Gastrocnemius medialis (tissue), 4 donors: ENCODE measurements at regions of chr18 and their contacts with region 1.

Region 1: DNA sequence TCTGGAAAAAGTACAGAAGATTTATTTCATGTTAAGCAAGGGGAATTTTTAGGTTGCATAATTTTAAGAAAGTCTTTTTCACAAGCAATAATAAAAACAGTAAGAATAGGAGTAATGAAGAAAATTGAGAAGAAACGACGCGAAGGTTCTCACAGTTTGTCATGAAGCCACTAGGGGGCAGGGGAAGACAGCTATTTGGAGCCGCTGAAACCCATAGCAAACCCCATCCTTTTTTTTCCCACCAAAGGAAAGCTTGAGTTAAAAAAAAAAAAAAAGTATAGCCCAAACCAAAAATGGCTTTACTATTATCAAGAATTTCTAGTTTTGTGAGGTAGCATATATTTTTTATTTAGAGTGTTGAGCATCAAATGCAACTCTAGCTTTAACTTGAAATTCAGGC is 300.9 kb downstream of the PHLPP1 start:
- DNase-seq: peak in 1 of 2 donors; percentile 12
- ATAC-seq: peak; percentile 66 to 69
- H3K4me3 ChIP-seq: no peak overlapping the region
- H3K27ac ChIP-seq: no peak overlapping the region
- H3K4me1 ChIP-seq: no peaks in the 10 kb centered on the region
- H3K27me3 ChIP-seq: no peaks in the 10 kb centered on the region
- CTCF ChIP-seq: peak; percentile 43 to 78 (median 70)
- POLR2A ChIP-seq: no peak

Region 2: GRCh38 chr18:63119647-63120046 is 103.4 kb after region 1 on chr18:
- in situ Hi-C with region 1: loop called in 1 of 4 experiments (anchors 10 kb)
- intact Hi-C with region 1: loop called (anchors 10 kb)
- DNase-seq: peak in 1 of 2 donors; percentile 41
- ATAC-seq: peak in 1 of 2 donors; percentile 64
- H3K4me3 ChIP-seq: no peak overlapping the region
- H3K27ac ChIP-seq: no peak overlapping the region
- H3K4me1 ChIP-seq: peaks cover 19 to 23% of the 10 kb centered on the region in 2 donors
- H3K27me3 ChIP-seq: no peaks in the 10 kb centered on the region
- CTCF ChIP-seq: peak in 3 of 5 experiments; percentile 32 to 66 (median 52)
- POLR2A ChIP-seq: no peak

Region 3: GRCh38 chr18:63155169-63155852 is 139.0 kb after region 1 on chr18:
- in situ Hi-C with region 1: no loop called
- intact Hi-C with region 1: loop called (anchors 10 kb)
- DNase-seq: peak; percentile 58 to 77
- ATAC-seq: peak; percentile 71 to 92
- H3K4me3 ChIP-seq: peak overlapping the region; percentile 15 to 42 (median 31)
- H3K27ac ChIP-seq: peak overlapping the region in 3 of 4 donors; percentile 60 to 82 (median 63)
- H3K4me1 ChIP-seq: peaks cover 27 to 34% of the 10 kb centered on the region in 2 donors
- H3K27me3 ChIP-seq: no peaks in the 10 kb centered on the region
- CTCF ChIP-seq: peak; percentile 76 to 85 (median 80)
- POLR2A ChIP-seq: no peak

Region 4: DNA sequence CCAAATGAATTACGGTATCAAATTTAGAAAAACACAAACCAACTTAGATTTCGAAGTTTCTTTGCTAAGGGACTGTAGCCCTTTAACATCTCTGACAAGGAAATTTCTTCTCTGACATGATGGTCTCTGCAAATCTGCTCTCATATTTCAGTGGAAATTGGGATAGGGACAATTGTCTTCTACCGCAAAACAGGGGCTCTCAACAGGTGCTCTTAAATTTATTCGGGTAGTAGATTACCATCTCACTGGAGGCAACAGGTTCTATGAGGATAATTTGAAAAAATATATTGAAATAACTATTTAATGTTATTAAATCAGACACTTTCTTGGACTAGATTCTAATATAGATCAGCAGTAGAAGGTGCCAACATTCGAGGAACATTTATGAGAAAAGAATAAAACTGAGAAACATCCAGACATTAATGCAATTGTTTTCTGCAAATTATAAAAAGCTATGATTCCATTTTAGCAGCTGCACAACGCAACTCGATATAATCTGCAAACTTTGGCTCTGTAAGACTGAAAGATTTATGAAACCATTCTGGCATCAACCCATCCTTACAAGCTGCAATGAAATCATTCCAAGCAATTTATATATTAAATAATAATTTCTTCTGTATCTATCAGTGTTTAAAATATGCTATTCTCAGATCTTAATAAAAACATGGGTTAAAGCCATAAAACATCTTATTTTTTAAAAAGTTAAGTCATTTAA is 313.3 kb after region 1 on chr18:
- in situ Hi-C with region 1: loop called in 3 of 4 experiments (anchors 5 to 10 kb)
- intact Hi-C with region 1: no loop called
- DNase-seq: no peak
- ATAC-seq: no peak
- H3K4me3 ChIP-seq: no peak overlapping the region
- H3K27ac ChIP-seq: no peak overlapping the region
- H3K4me1 ChIP-seq: no peaks in the 10 kb centered on the region
- H3K27me3 ChIP-seq: no peaks in the 10 kb centered on the region
- CTCF ChIP-seq: no peak
- POLR2A ChIP-seq: no peak

Region 5: DNA sequence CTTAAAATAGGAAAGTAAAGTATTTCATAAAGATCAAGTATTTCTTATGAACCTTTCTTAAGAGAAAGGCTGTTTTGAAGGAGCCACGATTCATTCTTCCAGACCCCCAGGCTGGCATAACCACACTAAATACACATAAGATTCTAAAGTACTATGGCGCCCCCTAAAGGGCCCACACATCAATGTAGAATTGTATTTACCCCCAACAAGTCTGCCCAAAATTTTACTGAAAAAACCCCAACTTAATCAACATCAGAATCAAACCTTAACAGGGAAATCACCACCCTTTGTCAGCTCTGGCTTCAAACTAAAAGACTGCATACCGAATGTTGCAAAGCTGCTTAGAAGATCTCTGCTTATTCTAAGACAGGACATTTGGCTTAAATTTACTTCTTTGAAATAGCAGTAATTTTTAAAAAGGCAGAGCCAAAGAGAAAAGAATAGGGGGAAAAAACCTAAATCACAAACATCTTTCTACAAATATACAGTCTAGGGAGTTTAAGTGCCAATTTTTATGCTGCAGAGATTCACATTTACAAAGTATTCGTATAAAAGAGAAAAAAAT is 323.7 kb after region 1 on chr18:
- in situ Hi-C with region 1: loop called in 1 of 4 experiments (anchors 5 kb)
- intact Hi-C with region 1: loop called (anchors 5 kb)
- DNase-seq: no peak
- ATAC-seq: no peak
- H3K4me3 ChIP-seq: no peak overlapping the region
- H3K27ac ChIP-seq: no peak overlapping the region
- H3K4me1 ChIP-seq: peaks cover 0 to 4% of the 10 kb centered on the region in 2 donors
- H3K27me3 ChIP-seq: no peaks in the 10 kb centered on the region
- CTCF ChIP-seq: peak; percentile 10 to 50 (median 24)
- POLR2A ChIP-seq: no peak

Region 6: DNA sequence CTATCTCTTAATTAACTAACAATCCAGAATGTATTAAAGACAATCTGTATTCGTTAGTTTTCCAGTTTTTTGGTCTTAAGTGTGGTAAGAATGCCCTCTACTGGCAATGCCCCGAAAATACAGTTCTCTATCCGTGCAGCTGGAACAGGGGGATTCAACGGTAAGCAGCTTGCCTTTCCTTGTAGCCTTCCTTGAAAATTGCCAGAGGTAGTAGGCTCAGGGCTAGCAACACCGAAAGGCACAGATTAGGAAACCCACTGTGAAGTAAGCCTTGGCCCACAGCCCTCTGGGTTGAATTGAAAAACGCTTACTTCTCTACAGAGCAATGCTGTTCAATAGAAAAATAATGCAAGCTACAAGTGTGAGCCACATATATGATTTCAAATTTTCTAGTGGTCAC is 423.1 kb after region 1 on chr18:
- in situ Hi-C with region 1: loop called (anchors 5 to 10 kb)
- intact Hi-C with region 1: loop called (anchors 2 kb)
- DNase-seq: peak; percentile 10 to 33
- ATAC-seq: peak; percentile 68 to 80
- H3K4me3 ChIP-seq: no peak overlapping the region
- H3K27ac ChIP-seq: no peak overlapping the region
- H3K4me1 ChIP-seq: peaks cover 3 to 5% of the 10 kb centered on the region in 2 donors
- H3K27me3 ChIP-seq: no peaks in the 10 kb centered on the region
- CTCF ChIP-seq: peak; percentile 64 to 77 (median 67)
- POLR2A ChIP-seq: no peak

Region 7: DNA sequence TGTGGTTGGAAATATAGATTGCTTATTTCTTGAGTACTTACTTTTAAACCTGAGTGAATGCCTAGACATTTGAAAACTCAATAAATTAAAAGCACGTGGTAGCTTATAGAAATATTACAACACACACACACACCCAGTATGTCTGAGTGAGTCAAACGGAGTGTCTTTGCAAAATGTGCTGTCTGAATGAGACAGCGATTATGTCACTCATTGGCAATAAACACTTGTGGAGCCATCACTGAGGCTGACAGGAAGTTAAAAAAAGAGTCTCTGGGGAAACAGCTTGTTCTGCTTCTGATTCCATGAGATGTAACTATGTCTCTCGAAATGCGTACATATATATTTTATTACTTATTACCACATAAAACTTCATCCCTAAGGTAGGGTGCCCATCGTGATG is 428.3 kb after region 1 on chr18:
- in situ Hi-C with region 1: loop called (anchors 5 to 10 kb)
- intact Hi-C with region 1: loop called (anchors 2 kb)
- DNase-seq: peak; percentile 19 to 20
- ATAC-seq: peak; percentile 80 to 89
- H3K4me3 ChIP-seq: no peak overlapping the region
- H3K27ac ChIP-seq: peak overlapping the region in 2 of 4 donors; percentile 32 to 47
- H3K4me1 ChIP-seq: no peaks in the 10 kb centered on the region
- H3K27me3 ChIP-seq: no peaks in the 10 kb centered on the region
- CTCF ChIP-seq: no peak
- POLR2A ChIP-seq: no peak